CD8-positive, alpha-beta T cell (primary cell): ENCODE measurements at regions of chr17 and their contacts with region 1.

Region 1: GRCh38 chr17:74864866-74865395 is 5.2 kb upstream of the GRIN2C start:
- DNase-seq: peak; percentile 46 to 84 (median 73)
- ATAC-seq: peak; percentile 75
- H3K4me3 ChIP-seq: no peak overlapping the region
- H3K4me3 Mint-ChIP-seq: no peak overlapping the region
- H3K27ac ChIP-seq: no peak overlapping the region
- H3K27ac Mint-ChIP-seq: no peak overlapping the region
- H3K4me1 ChIP-seq: peaks cover 21% of the 10 kb centered on the region
- H3K4me1 Mint-ChIP-seq: peaks cover 13% of the 10 kb centered on the region
- H3K27me3 ChIP-seq: peaks cover 8 to 21% of the 10 kb centered on the region in 2 experiments
- H3K27me3 Mint-ChIP-seq: peaks cover 13% of the 10 kb centered on the region
- CTCF ChIP-seq: peak; percentile 92

Region 2: DNA sequence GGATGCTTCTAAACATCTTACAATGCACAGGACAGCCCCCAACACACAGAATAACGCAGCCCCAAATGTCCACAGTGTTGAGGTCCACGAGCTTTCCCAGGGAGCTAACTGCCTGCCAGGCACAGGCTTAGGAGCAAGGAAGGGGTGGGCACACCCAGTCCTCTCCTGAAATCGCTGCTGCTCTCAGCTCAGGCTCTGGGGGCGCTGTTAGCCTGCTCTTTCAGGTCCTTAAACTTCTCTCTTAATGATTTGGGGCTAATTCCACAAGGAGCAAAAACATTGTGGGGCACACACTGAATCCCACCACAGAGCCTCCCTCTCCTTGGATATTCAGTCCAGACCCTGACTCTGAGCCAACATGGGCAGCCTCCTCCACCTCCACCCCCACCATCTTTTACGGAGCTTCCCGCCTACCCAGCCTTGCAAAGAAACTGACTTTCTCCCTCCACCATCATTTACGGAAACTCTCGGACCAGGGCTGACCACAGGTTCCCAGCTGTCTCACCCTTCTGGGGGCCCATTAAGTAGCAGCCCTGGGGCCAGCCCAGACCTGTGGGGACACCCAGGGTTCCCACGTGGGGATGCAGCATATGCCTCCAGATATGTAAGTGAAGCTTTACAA is 298.7 kb before region 1 on chr17:
- CTCF ChIA-PET with region 1: interaction called, 4 read pairs
- POLR2A ChIA-PET with region 1: no interaction called
- intact Hi-C with region 1: loop called in 1 of 2 experiments (anchors 10 kb)
- DNase-seq: peak in 4 of 9 experiments; percentile 15 to 52 (median 37)
- ATAC-seq: no peak
- H3K4me3 ChIP-seq: no peak overlapping the region
- H3K4me3 Mint-ChIP-seq: no peak overlapping the region
- H3K27ac ChIP-seq: no peak overlapping the region
- H3K27ac Mint-ChIP-seq: no peak overlapping the region
- H3K4me1 ChIP-seq: peaks cover 3% of the 10 kb centered on the region
- H3K4me1 Mint-ChIP-seq: peaks cover 2% of the 10 kb centered on the region
- H3K27me3 ChIP-seq: peaks cover 0 to 12% of the 10 kb centered on the region in 2 experiments
- H3K27me3 Mint-ChIP-seq: peaks cover 47% of the 10 kb centered on the region
- CTCF ChIP-seq: no peak

Region 3: DNA sequence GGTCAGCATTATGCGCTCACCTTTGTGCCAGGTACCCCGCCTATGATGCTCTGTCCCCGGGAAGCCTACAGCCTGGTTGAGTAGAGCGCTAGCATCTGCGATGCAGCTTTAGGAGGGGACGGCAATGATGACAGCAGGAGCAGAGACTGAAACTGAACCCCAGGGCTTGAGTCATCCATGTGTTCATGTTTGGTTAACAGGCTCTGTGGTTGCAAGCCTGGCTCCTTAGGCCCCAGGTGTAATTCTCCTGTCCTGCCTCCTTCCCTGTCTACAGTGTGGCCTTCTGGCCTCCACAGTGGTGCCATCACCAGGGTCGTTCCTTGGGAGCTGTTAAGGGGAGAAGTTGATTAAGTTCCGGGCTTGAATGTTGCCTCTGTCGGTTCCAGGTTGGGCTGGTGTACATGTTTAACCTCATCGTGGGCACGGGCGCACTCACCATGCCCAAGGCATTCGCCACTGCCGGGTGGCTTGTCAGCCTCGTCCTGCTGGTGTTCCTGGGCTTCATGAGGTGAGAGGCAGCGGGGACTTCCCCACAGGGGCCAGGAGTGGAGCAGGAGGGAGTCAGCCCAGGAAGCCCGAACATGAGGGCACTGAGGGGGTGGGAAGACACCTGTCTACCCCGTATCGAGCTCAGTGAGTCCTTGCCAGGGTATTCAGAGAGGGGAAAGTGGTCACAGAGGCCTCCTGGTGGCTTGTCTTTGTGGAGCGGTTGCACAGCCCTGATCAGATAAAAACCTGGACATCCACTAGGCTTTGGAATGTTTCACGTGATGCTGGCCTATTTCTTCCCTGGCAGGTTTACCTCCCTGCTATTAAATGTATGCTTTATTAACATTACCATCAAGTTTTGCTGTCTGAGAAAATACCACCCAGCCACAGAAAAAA is 79.6 kb before region 1 on chr17:
- CTCF ChIA-PET with region 1: interaction called, 318 read pairs
- POLR2A ChIA-PET with region 1: no interaction called
- intact Hi-C with region 1: no loop called
- DNase-seq: no peak
- ATAC-seq: peak; percentile 17
- H3K4me3 ChIP-seq: no peak overlapping the region
- H3K4me3 Mint-ChIP-seq: no peak overlapping the region
- H3K27ac ChIP-seq: no peak overlapping the region
- H3K27ac Mint-ChIP-seq: peak overlapping the region; percentile 71
- H3K4me1 ChIP-seq: peaks cover 47% of the 10 kb centered on the region
- H3K4me1 Mint-ChIP-seq: peaks cover 66% of the 10 kb centered on the region
- H3K27me3 ChIP-seq: no peaks in the 10 kb centered on the region
- H3K27me3 Mint-ChIP-seq: no peaks in the 10 kb centered on the region
- CTCF ChIP-seq: no peak

Region 4: GRCh38 chr17:75124041-75124818 is 259.3 kb after region 1 on chr17:
- CTCF ChIA-PET with region 1: no interaction called
- POLR2A ChIA-PET with region 1: no interaction called
- intact Hi-C with region 1: no loop called
- DNase-seq: peak in 7 of 9 experiments; percentile 31 to 60 (median 38)
- ATAC-seq: peak; percentile 73
- H3K4me3 ChIP-seq: no peak overlapping the region
- H3K4me3 Mint-ChIP-seq: no peak overlapping the region
- H3K27ac ChIP-seq: no peak overlapping the region
- H3K27ac Mint-ChIP-seq: no peak overlapping the region
- H3K4me1 ChIP-seq: peaks cover 20% of the 10 kb centered on the region
- H3K4me1 Mint-ChIP-seq: peaks cover 21% of the 10 kb centered on the region
- H3K27me3 ChIP-seq: no peaks in the 10 kb centered on the region
- H3K27me3 Mint-ChIP-seq: no peaks in the 10 kb centered on the region
- CTCF ChIP-seq: no peak